Caco-2 (cell line): ENCODE measurements at regions of chr4 and their contacts with region 1.

Region 1: DNA sequence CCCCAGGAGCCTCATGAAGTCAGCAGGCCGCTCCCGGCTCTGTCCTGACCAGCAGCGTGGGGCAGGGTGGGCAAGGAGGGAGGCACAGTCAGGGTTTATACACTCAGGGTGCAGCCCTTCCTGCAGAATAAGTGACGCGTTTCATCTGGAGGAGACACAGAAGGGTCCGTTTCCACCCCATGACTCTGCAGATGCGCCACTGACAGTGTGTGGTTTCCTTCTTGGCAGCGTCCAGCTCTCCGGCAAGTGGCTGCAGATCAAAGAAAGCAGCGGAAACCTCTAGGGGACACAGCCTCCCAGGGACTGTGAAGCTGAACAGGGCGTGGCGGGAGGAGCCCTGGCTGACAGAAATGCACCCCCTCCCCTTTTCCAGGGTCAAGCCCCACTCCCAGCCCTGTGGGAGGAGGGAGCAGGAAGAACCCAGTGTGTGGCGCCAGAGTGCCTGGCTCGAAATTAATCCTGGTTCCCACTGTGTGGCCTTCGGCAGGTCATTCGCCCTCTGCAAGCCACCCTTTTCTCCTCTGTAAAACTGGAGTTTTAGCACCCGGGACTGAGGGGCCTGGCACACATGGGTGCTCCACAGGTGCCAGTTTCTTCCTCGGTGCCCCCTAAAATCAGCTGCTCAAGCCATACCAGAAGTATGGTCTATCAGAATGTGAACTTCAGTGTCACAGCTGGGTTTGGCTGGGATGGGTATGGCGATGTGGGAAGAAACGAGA is 17.3 kb upstream of the TBC1D14 start:
- DNase-seq: peak; percentile 69 to 76
- H3K4me3 ChIP-seq: no peak overlapping the region
- H3K4me3 Mint-ChIP-seq: peak overlapping the region; percentile 34
- H3K27ac Mint-ChIP-seq: peak overlapping the region; percentile 89
- H3K4me1 ChIP-seq: peaks cover 33% of the 10 kb centered on the region
- H3K4me1 Mint-ChIP-seq: peaks cover 25% of the 10 kb centered on the region
- H3K27me3 ChIP-seq: no peaks in the 10 kb centered on the region
- H3K27me3 Mint-ChIP-seq: no peaks in the 10 kb centered on the region
- CTCF ChIP-seq: peak in 1 of 2 experiments; percentile 30

Region 2: DNA sequence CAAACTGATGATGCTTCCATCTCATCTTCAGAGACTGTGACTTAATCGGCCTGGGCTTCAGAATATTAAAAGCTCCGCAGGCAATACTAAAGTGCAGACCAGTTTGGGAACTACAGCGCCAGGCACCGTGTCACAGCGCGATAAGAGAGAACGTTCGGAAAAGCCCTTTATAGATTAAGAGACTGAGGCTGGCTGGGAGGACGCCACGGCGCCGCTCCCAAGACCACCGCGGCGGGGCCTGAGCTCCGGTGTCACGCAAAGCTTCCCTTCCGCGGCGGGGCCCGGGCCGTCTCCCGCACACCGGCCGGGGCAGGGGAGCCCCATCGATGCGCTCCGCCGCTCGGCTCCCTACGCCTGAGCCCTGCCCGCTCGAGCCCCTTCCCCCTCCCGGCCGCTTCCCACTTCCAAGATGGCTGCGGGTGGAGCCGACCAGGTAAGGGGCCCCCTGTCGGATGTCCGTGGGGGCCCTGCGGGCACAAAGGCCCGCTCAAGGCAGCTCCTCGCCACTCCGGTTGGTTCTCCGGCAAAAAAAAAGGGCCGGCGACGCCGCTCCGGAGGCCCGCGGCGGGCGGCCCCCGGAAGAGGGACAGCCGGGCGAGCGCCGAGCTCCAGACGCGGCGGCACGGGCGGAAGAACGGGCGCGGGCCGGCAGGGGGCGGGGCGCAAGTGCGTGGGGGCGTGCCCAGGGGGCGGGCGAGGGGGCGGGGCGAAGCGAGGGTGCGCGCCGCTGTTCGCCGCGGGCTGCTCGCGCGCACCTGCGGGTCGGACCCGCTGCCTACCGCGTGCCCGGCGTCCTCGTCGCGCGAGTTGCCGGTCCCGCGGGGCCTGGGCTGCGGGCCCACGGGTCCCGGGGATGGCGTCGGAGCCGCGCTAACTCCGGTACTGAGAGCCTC is 17.0 kb after region 1 on chr4 and contains the start of gene TBC1D14:
- CTCF ChIA-PET with region 1: interaction called, 18 read pairs
- POLR2A ChIA-PET with region 1: interaction called, 16 read pairs
- intact Hi-C with region 1: no loop called
- DNase-seq: peak; percentile 90
- H3K4me3 ChIP-seq: peak within 1 kb of the TSS; percentile 83
- H3K4me3 Mint-ChIP-seq: peak within 1 kb of the TSS; percentile 94
- H3K27ac Mint-ChIP-seq: peak within 1 kb of the TSS; percentile 89
- H3K4me1 ChIP-seq: peaks cover 23% of the 10 kb centered on the region
- H3K4me1 Mint-ChIP-seq: peaks cover 27% of the 10 kb centered on the region
- H3K27me3 ChIP-seq: no peaks in the 10 kb centered on the region
- H3K27me3 Mint-ChIP-seq: no peaks in the 10 kb centered on the region
- CTCF ChIP-seq: peak in 1 of 2 experiments; percentile 16
- total RNA-seq, gene TBC1D14: 54.0 and 57.6 TPM in 2 replicates

Region 3: DNA sequence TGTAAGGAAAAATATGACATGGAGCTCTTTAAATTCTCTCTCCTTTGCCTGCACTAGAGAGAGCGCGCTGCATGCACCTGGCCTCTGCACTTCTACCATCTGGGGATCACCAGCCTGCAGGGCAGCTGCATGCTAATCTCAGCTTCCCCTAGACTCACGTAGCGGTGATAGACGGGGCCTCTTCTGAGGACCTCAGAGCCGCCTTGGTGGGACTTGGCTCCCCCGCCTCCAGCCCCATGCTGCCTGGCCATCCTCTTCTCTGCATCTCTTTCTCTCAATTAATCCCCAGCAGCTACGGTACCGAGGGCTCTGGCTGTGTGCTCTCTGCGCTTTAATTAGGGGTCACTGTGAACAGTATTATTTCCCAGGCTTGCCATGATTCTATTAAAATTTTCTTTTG is 595.2 kb after region 1 on chr4:
- CTCF ChIA-PET with region 1: no interaction called
- POLR2A ChIA-PET with region 1: no interaction called
- intact Hi-C with region 1: no loop called
- DNase-seq: no peak
- H3K4me3 ChIP-seq: no peak overlapping the region
- H3K4me3 Mint-ChIP-seq: no peak overlapping the region
- H3K27ac Mint-ChIP-seq: no peak overlapping the region
- H3K4me1 ChIP-seq: no peaks in the 10 kb centered on the region
- H3K4me1 Mint-ChIP-seq: no peaks in the 10 kb centered on the region
- H3K27me3 ChIP-seq: no peaks in the 10 kb centered on the region
- H3K27me3 Mint-ChIP-seq: peaks cover 6% of the 10 kb centered on the region
- CTCF ChIP-seq: no peak